ENCODE measurements at regions of chr1 and their contacts with region 1.

Region 1: GRCh38 chr1:222792744-222793143 is 22.1 kb upstream of the DISP1 start:
- DNase-seq: no peak
- ATAC-seq: no peak
- H3K4me3 Mint-ChIP-seq: no peak overlapping the region
- H3K27ac Mint-ChIP-seq: no peak overlapping the region
- H3K4me1 Mint-ChIP-seq: peaks cover 7% of the 10 kb centered on the region
- H3K27me3 Mint-ChIP-seq: no peaks in the 10 kb centered on the region

Region 2: GRCh38 chr1:222288040-222288439 is 504.7 kb before region 1 on chr1:
- CTCF ChIA-PET with region 1: no interaction called
- POLR2A ChIA-PET with region 1: no interaction called
- intact Hi-C with region 1: no loop called
- DNase-seq: no peak
- ATAC-seq: no peak
- H3K4me3 Mint-ChIP-seq: no peak overlapping the region
- H3K27ac Mint-ChIP-seq: no peak overlapping the region
- H3K4me1 Mint-ChIP-seq: no peaks in the 10 kb centered on the region
- H3K27me3 Mint-ChIP-seq: no peaks in the 10 kb centered on the region

Region 3: DNA sequence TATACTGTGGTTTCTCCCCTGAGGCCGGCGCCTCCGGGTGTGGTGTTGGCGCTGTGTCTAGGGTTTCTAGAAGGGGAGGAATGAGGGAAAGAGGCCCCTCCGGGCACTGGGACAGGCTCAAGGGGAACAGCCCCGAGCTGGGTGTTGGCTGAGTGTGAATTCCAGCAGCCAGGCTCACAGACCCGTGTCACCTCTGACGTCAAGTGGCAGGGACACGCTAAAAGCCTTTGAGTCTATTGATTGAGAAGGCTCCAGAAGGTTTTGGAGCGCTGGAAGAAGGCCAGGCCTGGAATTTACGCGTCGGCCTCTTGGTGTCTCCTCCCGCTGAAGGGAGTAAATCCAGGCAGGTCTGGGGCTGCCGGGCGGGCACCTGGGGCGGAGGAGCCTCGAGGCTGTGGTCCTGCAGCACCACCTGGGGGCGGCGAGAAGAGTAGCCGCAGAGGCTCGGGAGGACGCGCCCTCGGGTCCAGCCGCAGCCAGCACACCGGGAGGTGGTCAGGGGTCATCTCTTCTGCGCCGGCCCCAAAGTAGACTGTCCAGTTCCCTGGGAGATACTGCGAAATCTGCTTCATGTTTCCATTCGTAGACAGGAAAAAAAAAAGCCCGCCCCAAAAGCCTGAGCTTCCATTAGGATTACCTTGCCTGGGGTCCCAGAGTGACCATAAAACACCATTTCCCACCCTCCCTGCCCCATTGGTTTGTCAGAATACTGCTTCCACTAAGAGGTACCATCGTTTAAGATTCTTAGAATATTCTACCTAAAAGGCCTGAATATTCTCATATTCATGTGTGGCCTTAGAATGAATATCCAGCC is 288.6 kb after region 1 on chr1:
- CTCF ChIA-PET with region 1: interaction called, 7 read pairs
- POLR2A ChIA-PET with region 1: no interaction called
- intact Hi-C with region 1: loop called (anchors 1 kb)
- DNase-seq: peak; percentile 89
- ATAC-seq: peak; percentile 99
- H3K4me3 Mint-ChIP-seq: peak overlapping the region; percentile 30
- H3K27ac Mint-ChIP-seq: no peak overlapping the region
- H3K4me1 Mint-ChIP-seq: no peaks in the 10 kb centered on the region
- H3K27me3 Mint-ChIP-seq: no peaks in the 10 kb centered on the region

Region 4: DNA sequence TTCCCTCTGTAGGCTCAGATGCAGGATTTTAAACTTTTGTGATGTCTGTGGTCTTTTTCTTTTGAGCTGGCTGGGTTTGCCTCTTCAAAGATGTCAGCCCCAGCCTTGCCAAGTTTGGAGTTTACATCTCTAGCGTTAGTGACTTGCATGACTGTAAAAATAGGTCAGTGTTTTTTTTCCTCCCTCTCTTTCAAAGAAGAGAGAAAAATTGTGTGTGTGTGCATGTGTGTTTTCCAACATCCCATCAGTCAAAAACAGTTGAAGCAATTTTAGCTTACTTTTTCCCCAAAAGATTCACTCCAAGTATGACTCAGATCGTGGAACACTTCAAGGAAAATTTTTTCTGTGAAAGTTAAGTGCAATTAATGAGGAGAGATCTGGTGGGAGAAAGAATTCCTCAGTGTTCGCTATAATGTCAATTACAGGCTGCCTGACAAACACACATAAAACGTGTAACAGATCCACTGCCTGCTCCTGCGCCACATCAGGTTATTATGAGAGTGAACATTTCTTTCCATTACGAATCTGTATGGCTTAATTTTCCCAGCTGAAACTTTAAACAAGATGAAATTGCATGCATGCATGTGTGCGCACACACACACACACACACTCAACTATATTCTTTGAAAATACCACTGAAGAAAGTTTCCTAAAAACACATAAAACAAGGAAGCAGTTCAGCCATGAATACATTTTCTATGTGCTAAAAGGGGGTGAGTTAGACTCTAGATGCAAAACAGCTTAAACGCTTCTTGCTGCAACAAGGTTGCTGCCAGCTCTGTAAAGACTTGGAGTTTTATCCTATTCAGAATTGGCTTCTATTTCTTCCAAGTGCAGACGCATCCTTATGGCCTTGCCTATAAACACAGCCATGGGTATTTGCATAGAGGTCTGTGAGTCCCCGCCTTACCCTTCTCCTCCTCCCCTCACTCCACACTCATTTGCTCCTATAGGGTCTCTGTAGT is 294.8 kb after region 1 on chr1:
- CTCF ChIA-PET with region 1: interaction called, 14 read pairs
- POLR2A ChIA-PET with region 1: no interaction called
- intact Hi-C with region 1: no loop called
- DNase-seq: no peak
- ATAC-seq: no peak
- H3K4me3 Mint-ChIP-seq: no peak overlapping the region
- H3K27ac Mint-ChIP-seq: no peak overlapping the region
- H3K4me1 Mint-ChIP-seq: peaks cover 10% of the 10 kb centered on the region
- H3K27me3 Mint-ChIP-seq: no peaks in the 10 kb centered on the region

Region 5: GRCh38 chr1:223683586-223684487 is 891.1 kb after region 1 on chr1:
- CTCF ChIA-PET with region 1: no interaction called
- POLR2A ChIA-PET with region 1: no interaction called
- intact Hi-C with region 1: loop called (anchors 10 kb)
- DNase-seq: peak; percentile 73
- ATAC-seq: peak; percentile 57
- H3K4me3 Mint-ChIP-seq: no peak overlapping the region
- H3K27ac Mint-ChIP-seq: no peak overlapping the region
- H3K4me1 Mint-ChIP-seq: no peaks in the 10 kb centered on the region
- H3K27me3 Mint-ChIP-seq: peaks cover under 1% of the 10 kb centered on the region

Measured in activated CD4-positive, alpha-beta T cell treated with anti-CD3 and anti-CD28 coated beads for 36 hours (primary cell).